ENCODE measurements at regions of chr10 and their contacts with region 1.

Region 1: DNA sequence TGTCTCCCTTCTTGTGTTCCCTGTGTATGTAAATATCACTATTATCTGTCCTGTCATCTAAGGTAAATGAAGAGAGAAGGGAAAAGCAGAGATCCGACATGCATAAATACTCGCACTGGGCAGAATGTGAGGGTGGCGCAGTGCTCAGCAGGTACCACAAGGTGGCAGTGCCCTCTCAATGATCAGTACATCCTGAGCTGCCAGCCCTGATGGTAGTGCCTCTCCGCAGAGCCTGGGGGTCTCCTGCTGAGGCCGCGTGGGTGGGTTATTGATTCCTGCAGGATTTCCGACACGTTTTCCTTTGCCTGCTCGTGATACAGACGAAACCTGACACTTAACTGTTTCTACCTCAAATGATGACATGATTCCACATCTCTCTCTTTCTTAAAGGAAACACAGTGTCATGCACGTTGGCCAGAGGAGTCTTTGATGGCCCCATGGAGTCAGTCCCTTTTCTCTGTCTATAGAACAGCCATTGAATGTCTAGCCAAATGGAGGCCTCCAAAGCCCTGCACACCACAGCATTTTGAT is 19.8 kb downstream of the RGR start:
- DNase-seq: peak in 2 of 3 donors; percentile 76 to 85
- ATAC-seq: peak; percentile 88
- H3K4me3 ChIP-seq: no peak overlapping the region
- H3K4me1 ChIP-seq: no peaks in the 10 kb centered on the region
- CTCF ChIP-seq: peak; percentile 76

Region 2: GRCh38 chr10:83564889-83565588 is 699.6 kb before region 1 on chr10:
- intact Hi-C with region 1: no loop called
- DNase-seq: no peak
- ATAC-seq: no peak
- H3K4me3 ChIP-seq: no peak overlapping the region
- H3K4me1 ChIP-seq: no peaks in the 10 kb centered on the region
- CTCF ChIP-seq: no peak

Region 3: DNA sequence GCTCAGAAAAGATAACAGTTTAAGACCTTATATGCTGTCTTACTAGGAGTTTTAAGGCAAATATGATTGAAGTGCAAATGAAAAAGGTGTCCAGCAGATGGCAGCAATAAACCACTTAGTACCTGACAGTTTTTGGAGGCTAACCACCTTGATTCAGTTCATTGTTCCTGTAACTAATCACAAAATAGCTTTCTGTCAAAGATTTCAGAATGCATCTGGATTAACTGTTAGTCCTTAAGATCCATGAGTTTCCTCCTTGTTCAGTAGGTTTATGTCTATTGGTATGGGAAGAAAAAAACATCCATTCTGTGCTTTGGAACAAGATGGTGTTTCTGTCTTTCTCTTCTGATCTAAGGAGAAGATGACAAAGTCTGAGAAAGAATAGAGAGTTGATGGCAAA is 110.3 kb after region 1 on chr10:
- intact Hi-C with region 1: loop called in 1 of 2 experiments (anchors 10 kb)
- DNase-seq: peak in 1 of 3 donors; percentile 80
- ATAC-seq: peak; percentile 68
- H3K4me3 ChIP-seq: no peak overlapping the region
- H3K4me1 ChIP-seq: no peaks in the 10 kb centered on the region
- CTCF ChIP-seq: peak; percentile 37

Region 4: GRCh38 chr10:84510121-84510520 is 245.4 kb after region 1 on chr10:
- intact Hi-C with region 1: no loop called
- DNase-seq: no peak
- ATAC-seq: no peak
- H3K4me3 ChIP-seq: no peak overlapping the region
- H3K4me1 ChIP-seq: no peaks in the 10 kb centered on the region
- CTCF ChIP-seq: no peak